ENCODE measurements at regions of chr17 and their contacts with region 1.

Region 1: DNA sequence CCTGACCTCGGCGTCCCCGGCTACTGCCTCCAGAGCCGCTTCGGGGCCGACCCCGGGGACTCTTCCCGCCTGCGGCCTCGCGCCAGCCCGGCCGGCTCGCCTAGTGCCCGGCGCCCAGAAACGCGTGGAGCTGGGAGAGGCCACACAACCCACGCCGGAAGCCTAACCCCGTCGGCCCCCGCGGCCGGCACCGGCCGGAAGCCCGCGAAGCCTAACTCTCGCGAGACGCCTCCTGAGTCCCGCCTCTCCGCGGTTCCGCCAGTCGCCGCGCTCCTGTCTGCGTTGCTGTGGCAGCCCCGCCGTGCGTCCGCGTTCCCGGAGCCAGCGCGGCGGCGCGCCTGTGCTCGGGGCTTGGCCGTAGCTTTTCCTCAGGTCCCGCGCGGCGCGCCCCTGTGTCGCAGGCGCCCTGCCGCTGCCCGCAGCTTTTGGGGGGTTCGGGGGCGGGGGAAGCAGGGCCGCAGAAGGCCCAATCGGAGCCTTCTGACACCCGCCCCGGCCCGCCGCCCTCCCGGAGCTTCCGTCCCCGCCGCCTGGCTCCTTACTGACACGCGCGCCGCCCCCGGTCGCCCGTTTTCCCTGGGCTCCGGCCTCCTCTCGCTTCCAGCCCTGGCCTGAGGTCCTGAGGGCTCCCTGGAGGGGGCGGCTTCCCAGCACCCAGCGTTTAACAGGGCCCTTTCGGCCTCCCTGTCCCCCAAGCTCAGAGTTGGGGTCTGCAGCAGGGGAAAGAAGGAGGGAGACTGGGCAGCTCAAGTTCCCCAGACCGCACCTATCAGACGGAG is 21.7 kb downstream of the NPTX1 start:
- DNase-seq: peak; percentile 91 to 99 (median 96)
- H3K4me3 ChIP-seq: peak overlapping the region; percentile 57 to 98 (median 86)
- H3K27ac ChIP-seq: peak overlapping the region; percentile 68 to 99 (median 97)
- H3K27me3 ChIP-seq: no peaks in the 10 kb centered on the region
- CTCF ChIP-seq: peak in 41 of 56 donors; percentile 2 to 63 (median 35)

Region 2: DNA sequence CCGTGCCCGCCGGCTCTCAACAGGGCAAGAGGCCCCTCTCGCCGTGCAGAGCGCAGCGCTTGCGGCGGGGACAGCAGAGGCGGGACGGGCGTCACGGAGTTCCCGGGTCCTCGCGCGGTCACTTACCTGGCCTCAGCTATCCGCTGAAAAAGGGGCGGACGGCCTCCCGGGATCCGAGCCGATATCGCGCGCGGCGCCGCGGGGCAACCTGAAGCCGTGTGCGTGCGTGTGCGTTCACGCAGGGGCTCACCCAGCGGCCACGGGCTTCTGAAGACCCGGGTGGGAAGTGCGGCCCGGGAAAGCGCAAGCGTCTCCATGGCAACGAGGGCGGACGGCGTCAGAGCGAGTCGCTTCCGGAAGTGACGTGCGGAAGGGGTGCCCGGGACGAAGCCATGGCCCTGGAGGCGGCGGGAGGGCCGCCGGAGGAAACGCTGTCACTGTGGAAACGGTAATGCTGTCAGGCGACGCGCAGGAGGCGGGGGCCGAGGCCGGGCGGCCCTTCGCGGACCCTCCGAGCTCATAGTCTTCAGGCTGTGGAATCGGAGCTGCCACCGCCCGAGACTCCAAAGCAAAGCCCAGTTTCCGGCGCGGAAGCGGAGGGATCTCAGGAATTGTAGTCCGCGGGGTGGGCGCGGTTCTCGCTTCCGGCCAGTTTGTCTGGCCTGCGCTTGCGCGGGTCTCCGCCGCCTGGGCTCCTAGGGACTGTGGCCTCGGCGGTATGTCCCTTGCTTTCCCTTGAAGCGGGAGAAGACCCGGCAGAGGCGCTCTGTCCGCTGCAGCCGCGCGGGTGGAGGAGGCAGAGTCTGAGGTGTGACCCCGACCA is 39.7 kb before region 1 on chr17 and contains the start of gene ENDOV:
- intact Hi-C with region 1: loop called in 1 of 2 experiments (anchors 1 kb)
- DNase-seq: peak; percentile 89 to 97 (median 94)
- H3K4me3 ChIP-seq: peak within 1 kb of the TSS; percentile 70 to 100 (median 92)
- H3K27ac ChIP-seq: peak within 1 kb of the TSS; percentile 84 to 100 (median 96)
- H3K27me3 ChIP-seq: no peaks in the 10 kb centered on the region
- CTCF ChIP-seq: peak in 23 of 56 donors; percentile 4 to 51 (median 28)
- total RNA-seq, gene ENDOV: 21.4 to 61.2 (median 36.5) TPM

Region 3: DNA sequence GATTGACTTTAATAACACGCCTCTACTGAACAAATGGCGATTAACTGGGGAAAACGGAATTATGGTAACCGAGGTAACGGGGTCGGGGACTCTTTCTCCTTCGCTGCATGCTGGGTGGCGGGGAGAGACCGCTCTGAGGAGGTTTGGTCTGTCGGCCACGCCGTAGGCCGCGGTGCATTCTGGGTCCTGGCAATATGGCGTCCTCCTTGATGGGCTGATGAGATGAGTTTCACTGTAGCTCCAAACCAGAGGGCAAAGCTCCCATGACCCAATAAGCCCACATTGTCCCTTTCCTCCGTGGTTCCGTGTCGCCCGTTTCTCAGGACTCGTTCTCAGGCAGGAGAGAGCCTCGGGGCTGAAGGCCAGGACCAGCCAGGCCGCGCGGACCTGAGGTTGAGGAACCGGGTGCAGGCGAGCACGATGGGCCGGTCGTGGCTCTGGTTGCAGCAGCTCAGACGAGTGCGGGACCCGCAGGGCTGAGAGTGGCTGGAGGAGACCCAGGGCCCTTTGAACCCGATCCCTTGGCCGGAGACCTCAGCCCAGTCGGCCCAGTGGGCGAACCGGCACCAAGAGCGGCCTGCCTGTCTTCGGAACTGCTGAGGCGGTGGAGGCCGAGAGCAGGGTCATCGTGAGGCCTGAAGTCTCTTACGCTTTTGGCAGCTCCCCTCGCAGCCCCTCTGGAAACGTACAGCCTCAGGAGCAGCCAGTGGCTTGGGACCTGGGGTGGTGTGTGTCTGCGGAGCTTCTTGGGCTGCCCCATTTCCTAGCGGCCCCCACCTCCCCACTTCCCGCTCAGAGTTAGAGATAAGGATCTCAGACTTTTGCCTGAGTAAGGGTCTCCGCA is 90.1 kb after region 1 on chr17 and contains the start of gene RPTOR:
- intact Hi-C with region 1: loop called in 1 of 2 experiments (anchors 10 kb)
- DNase-seq: peak; percentile 84 to 97 (median 94)
- H3K4me3 ChIP-seq: peak within 1 kb of the TSS; percentile 66 to 100 (median 94)
- H3K27ac ChIP-seq: peak within 1 kb of the TSS; percentile 13 to 95 (median 82)
- H3K27me3 ChIP-seq: no peaks in the 10 kb centered on the region
- CTCF ChIP-seq: peak in 47 of 56 donors; percentile 15 to 64 (median 37)
- total RNA-seq, gene RPTOR: 44.7 to 76.5 (median 57.2) TPM

Measured in dorsolateral prefrontal cortex (tissue), 120 donors.